ENCODE measurements at regions of chr2 and their contacts with region 1.

Region 1: GRCh38 chr2:134845719-134846118 is 7.3 kb downstream of the ACMSD start:
- DNase-seq: peak; percentile 79
- ATAC-seq: peak; percentile 65
- H3K4me3 ChIP-seq: no peak overlapping the region
- H3K27ac ChIP-seq: peak overlapping the region; percentile 93
- H3K4me1 ChIP-seq: peaks cover 39% of the 10 kb centered on the region
- H3K27me3 ChIP-seq: no peaks in the 10 kb centered on the region
- CTCF ChIP-seq: no peak

Region 2: DNA sequence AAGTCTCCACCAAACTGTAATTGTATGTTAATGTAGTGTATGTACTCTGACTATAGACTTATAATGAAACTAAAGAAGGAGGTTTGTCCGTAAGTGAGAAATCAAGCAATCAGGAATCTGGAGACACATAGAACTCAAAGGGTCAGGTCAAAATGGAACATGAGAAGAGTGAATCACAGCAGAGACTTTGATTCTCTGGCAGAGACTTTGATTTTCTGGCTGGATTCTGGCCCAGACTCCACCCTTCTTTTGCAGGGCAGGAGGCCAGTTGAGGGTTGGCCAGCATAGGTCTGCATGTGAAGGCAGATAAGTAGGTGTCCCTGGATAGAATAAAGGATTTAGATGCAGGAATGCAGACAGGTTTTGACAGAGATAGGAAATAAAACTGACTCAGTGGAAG is 1266.4 kb before region 1 on chr2:
- CTCF ChIA-PET with region 1: no interaction called
- POLR2A ChIA-PET with region 1: no interaction called
- intact Hi-C with region 1: no loop called
- DNase-seq: peak; percentile 96
- ATAC-seq: peak; percentile 85
- H3K4me3 ChIP-seq: peak overlapping the region; percentile 37; the same call in 1 of the 2 replicates
- H3K27ac ChIP-seq: peak overlapping the region; percentile 31
- H3K4me1 ChIP-seq: peaks cover 64% of the 10 kb centered on the region
- H3K27me3 ChIP-seq: no peaks in the 10 kb centered on the region
- CTCF ChIP-seq: no peak

Region 3: DNA sequence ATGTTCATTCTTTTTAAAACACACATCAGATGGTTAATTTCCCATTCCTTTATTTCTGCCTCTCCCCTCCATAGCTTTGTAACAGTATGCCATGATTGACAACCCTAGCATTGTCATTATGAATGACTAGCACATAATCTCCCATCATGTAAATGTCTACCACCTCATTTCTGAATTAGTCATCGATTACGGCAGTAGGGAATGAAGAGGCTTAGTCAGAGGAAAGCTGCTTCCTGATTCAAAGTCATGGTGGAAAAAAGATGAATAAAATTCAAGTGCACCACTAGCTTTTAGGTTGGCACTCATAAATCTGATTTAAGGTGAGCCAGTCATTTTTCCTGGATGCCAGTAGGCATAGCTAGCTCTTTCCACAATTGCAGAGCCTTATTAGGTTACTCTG is 26.4 kb before region 1 on chr2:
- CTCF ChIA-PET with region 1: no interaction called
- POLR2A ChIA-PET with region 1: interaction called, 20 read pairs
- intact Hi-C with region 1: no loop called
- DNase-seq: peak; percentile 95
- ATAC-seq: peak; percentile 68
- H3K4me3 ChIP-seq: no peak overlapping the region
- H3K27ac ChIP-seq: peak overlapping the region; percentile 98
- H3K4me1 ChIP-seq: peaks cover 35% of the 10 kb centered on the region
- H3K27me3 ChIP-seq: no peaks in the 10 kb centered on the region
- CTCF ChIP-seq: no peak

Region 4: GRCh38 chr2:134866549-134866981 is 20.8 kb after region 1 on chr2:
- CTCF ChIA-PET with region 1: no interaction called
- POLR2A ChIA-PET with region 1: no interaction called
- intact Hi-C with region 1: loop called (anchors 2 kb)
- DNase-seq: peak; percentile 83
- ATAC-seq: peak; percentile 95
- H3K4me3 ChIP-seq: no peak overlapping the region
- H3K27ac ChIP-seq: peak overlapping the region; percentile 51
- H3K4me1 ChIP-seq: peaks cover 17% of the 10 kb centered on the region
- H3K27me3 ChIP-seq: no peaks in the 10 kb centered on the region
- CTCF ChIP-seq: no peak

Measured in PC-3 (cell line).